ENCODE measurements at regions of chr13 and their contacts with region 1.

Region 1: GRCh38 chr13:95267662-95268342 is 33.4 kb downstream of the ABCC4 start:
- DNase-seq: peak; percentile 94
- H3K4me3 ChIP-seq: no peak overlapping the region
- H3K27ac ChIP-seq: peak overlapping the region; percentile 95
- H3K27me3 ChIP-seq: no peaks in the 10 kb centered on the region
- CTCF ChIP-seq: no peak

Region 2: DNA sequence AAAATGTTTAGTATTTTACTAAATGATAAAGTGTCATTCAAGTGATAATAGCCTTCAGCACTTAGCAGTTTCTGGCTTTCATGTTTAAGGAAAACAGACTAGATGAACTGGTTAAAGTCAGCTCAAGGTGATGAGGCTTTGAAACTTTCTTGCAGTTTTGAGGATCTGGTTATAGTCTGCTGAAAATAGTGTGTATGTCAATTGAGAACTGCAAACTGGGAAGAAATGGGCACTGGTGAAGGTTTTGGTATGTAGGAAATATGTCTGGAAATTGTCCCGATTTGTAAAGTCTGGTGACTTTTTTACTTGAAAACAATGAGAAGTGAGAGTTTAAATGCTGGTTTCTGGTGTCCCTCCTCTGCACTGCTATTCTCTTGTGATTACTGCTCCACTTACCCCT is 518.6 kb before region 1 on chr13:
- CTCF ChIA-PET with region 1: no interaction called
- POLR2A ChIA-PET with region 1: no interaction called
- DNase-seq: no peak
- H3K4me3 ChIP-seq: no peak overlapping the region
- H3K27ac ChIP-seq: no peak overlapping the region
- H3K27me3 ChIP-seq: no peaks in the 10 kb centered on the region
- CTCF ChIP-seq: no peak

Region 3: DNA sequence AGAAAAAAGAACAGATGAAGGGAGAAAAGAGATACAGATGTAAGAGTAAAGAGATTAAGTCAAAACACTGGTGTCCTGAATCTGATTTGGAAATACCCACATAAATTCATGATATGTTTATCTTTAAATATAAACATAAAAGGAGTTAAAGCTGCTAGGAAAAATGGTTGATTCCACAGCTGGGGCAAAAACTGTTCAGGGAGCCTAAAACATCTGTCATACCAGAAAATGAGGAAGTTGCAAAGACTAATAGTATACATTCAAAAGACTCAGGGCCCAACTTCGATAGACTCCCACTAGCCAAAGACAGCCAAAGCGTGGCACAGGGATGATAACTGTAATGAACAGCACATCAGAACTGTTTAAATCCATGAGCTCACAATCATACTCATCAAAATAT is 28.5 kb before region 1 on chr13:
- CTCF ChIA-PET with region 1: interaction called, 3 read pairs
- POLR2A ChIA-PET with region 1: interaction called, 14 read pairs
- DNase-seq: peak; percentile 58
- H3K4me3 ChIP-seq: no peak overlapping the region
- H3K27ac ChIP-seq: no peak overlapping the region
- H3K27me3 ChIP-seq: no peaks in the 10 kb centered on the region
- CTCF ChIP-seq: no peak

Region 4: DNA sequence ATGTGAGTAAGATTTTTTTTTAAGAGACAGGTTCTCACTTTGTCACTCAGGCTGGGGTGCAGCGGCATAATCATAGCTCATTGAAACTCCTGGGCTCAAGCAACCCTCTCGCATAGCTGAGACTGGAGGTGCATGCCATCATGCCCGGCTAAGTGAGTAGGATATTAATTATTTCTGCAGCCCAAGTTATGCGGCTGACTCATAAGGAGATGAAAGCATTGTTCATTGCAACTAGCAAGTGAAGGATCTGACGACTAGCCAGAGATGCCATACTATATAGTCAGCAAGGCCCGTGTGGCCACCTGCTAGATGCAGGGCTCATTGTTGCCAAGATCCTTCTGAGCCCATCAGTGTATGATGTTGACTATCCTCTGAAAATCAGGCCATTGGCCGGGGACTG is 11.7 kb before region 1 on chr13:
- CTCF ChIA-PET with region 1: no interaction called
- POLR2A ChIA-PET with region 1: interaction called, 22 read pairs
- DNase-seq: peak; percentile 90
- H3K4me3 ChIP-seq: no peak overlapping the region
- H3K27ac ChIP-seq: peak overlapping the region; percentile 83
- H3K27me3 ChIP-seq: no peaks in the 10 kb centered on the region
- CTCF ChIP-seq: no peak

Region 5: DNA sequence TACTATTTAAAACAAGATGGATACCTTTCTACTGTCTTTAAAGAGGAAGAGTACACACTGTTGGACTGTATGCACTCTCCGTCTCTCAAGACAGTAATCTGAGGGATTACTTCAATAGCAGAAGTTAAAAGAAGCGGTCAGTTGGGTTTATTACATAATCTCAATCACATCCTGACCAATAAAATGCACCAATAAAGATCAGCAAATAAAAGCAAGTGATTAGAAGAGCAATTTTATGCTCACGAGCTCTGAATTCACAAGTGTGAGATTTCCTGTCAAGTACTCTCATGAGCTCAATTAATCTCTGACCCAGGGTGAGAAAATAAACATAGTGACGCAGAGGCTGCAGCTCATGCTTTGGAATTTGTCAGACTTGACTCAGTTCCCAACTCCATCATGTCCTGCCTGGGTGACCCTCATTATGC is 21.2 kb after region 1 on chr13:
- CTCF ChIA-PET with region 1: no interaction called
- POLR2A ChIA-PET with region 1: interaction called, 18 read pairs
- DNase-seq: no peak
- H3K4me3 ChIP-seq: no peak overlapping the region
- H3K27ac ChIP-seq: no peak overlapping the region
- H3K27me3 ChIP-seq: no peaks in the 10 kb centered on the region
- CTCF ChIP-seq: no peak

Region 6: GRCh38 chr13:95301183-95301967 is 33.6 kb after region 1 on chr13 and contains the start of gene ABCC4:
- CTCF ChIA-PET with region 1: interaction called, 4 read pairs
- POLR2A ChIA-PET with region 1: interaction called, 18 read pairs
- DNase-seq: peak; percentile 27
- H3K4me3 ChIP-seq: peak within 1 kb of the TSS; percentile 85
- H3K27ac ChIP-seq: peak within 1 kb of the TSS; percentile 73
- H3K27me3 ChIP-seq: no peaks in the 10 kb centered on the region
- CTCF ChIP-seq: no peak
- polyA plus RNA-seq, gene ABCC4: 110 and 140 TPM in 2 replicates

Region 7: DNA sequence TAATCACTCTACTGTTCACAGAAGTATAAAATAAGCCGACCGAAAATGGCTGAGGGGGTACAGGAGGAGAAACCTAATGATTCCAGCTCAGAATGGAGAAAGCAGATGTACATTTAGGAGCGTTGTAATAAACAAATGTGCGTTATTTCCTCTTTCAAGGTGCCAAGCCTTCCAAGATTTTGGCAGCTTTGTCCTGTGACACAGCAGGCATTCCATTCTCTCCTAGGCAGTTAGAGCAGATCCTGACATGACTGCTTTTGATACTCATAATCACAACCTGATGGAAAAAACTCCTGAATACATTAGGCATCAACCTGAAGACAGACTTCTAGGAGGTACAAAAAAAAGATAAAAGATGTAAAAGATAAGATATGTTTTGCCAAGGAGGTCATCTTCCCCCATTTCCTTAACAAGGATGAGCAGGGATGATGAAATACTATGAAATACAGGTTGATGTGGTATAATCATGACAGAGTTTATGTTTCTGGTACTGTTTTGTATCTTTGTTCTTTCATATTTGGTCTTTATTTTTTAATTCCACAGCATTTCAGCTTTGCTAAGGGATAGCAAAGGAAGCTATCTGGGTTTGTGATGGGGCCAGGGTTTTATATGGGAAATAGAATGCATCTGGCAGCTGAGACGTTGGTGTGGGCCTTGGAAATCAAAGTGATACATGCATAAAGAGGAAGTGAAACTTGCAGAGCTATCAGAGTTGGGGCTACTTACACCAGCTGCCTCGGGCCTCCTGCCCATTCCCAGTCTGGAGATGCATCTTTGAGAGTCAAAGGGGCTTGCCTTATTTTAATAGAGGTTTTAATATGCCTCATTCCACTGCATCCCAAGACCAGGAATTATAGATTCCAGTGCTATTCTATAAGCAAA is 1503.9 kb after region 1 on chr13:
- CTCF ChIA-PET with region 1: no interaction called
- POLR2A ChIA-PET with region 1: no interaction called
- DNase-seq: no peak
- H3K4me3 ChIP-seq: no peak overlapping the region
- H3K27ac ChIP-seq: no peak overlapping the region
- H3K27me3 ChIP-seq: no peaks in the 10 kb centered on the region
- CTCF ChIP-seq: no peak